Spleen (tissue), 13 donors: ENCODE measurements at regions of chr12 and their contacts with region 1.

Region 1: GRCh38 chr12:50066433-50066832 is 9.0 kb downstream of the ASIC1 start:
- DNase-seq: no peak
- H3K4me3 ChIP-seq: no peak overlapping the region
- H3K27ac ChIP-seq: no peak overlapping the region
- H3K4me1 ChIP-seq: peaks cover 0 to 11% (median 6%) of the 10 kb centered on the region in 6 donors
- H3K27me3 ChIP-seq: peaks cover 0 to 38% (median 0%) of the 10 kb centered on the region in 7 donors
- CTCF ChIP-seq: no peak
- POLR2A ChIP-seq: no peak

Region 2: GRCh38 chr12:49853671-49854070 is 212.8 kb before region 1 on chr12:
- intact Hi-C with region 1: no loop called
- DNase-seq: no peak
- H3K4me3 ChIP-seq: no peak overlapping the region
- H3K27ac ChIP-seq: no peak overlapping the region
- H3K4me1 ChIP-seq: no peaks in the 10 kb centered on the region
- H3K27me3 ChIP-seq: peaks cover 0 to 20% (median 2%) of the 10 kb centered on the region in 7 donors
- CTCF ChIP-seq: no peak
- POLR2A ChIP-seq: no peak

Region 3: DNA sequence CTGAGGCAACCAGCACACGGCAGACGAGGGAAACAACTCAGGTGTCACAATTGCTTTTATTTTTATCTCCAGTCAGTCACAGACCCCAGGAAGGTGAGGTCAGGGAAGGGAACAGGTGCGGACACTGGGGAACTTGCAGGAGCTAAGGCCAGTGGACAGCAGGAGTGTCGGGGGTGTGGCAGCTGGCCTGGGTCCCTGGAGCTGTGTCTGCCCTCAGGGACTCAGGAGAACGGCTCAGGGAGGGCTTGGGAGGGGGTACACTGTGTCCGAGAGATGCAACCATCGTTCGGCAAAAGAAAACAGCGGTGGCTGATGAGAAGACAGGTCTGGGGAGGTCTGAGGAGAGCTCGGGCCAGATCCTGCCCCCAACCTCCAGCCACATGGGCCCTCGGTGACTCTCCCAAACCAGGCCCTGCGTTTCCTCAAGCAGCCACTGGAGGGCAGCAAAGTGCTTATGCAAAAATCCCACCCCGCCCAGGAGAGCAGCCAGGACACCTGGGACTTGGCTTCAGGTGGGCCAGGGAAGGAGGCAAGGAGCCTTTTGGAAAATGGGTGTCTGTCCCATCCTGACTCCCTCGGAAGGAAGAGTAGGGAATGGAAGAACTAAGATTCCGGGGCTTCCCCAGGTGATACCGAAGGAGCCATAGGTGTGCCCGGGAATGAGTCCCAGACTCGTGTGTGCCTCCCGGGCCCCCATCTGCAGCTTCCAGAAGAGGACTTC is 199.4 kb before region 1 on chr12:
- intact Hi-C with region 1: loop called (anchors 10 kb)
- DNase-seq: peak; percentile 88
- H3K4me3 ChIP-seq: no peak overlapping the region
- H3K27ac ChIP-seq: no peak overlapping the region
- H3K4me1 ChIP-seq: peaks cover 0 to 30% (median 11%) of the 10 kb centered on the region in 6 donors
- H3K27me3 ChIP-seq: peaks cover 0 to 32% (median 0%) of the 10 kb centered on the region in 7 donors
- CTCF ChIP-seq: peak; percentile 80 to 99 (median 95)
- POLR2A ChIP-seq: no peak